K562 (cell line): ENCODE measurements at regions of chr7 and their contacts with region 1.

Region 1: DNA sequence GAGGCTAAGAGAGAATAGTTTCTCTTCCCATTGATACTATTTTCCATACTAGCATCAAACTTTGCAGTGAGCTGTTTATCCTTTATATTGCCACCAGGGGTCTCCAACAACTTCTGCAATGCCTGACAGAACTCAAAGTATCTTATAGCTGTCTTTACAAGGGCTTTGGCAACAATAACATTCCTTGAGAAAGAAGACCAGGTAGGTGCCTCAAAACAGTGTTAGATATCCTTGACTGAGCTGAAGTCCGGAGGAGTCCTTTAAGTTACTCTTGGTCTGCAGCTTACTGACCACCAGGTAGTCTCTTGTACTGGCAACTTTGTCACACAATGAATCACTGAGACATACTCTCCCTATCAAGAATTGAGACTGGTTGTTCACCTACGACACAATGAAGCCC is 30.0 kb upstream of the TES start:
- DNase-seq: peak; percentile 39 to 62 (median 48)
- ATAC-seq: peak; percentile 93
- H3K4me3 ChIP-seq: no peak overlapping the region
- H3K27ac ChIP-seq: no peak overlapping the region
- H3K4me1 ChIP-seq: peaks cover 0 to 5% of the 10 kb centered on the region in 2 experiments; a peak in 1 of 5 replicates
- H3K27me3 ChIP-seq: no peaks in the 10 kb centered on the region
- CTCF ChIP-seq: peak; percentile 70 to 92 (median 79)
- EP300 ChIP-seq: no peak
- POLR2A ChIP-seq: no peak
- RAD21 ChIP-seq: peak; percentile 98 to 99

Region 2: DNA sequence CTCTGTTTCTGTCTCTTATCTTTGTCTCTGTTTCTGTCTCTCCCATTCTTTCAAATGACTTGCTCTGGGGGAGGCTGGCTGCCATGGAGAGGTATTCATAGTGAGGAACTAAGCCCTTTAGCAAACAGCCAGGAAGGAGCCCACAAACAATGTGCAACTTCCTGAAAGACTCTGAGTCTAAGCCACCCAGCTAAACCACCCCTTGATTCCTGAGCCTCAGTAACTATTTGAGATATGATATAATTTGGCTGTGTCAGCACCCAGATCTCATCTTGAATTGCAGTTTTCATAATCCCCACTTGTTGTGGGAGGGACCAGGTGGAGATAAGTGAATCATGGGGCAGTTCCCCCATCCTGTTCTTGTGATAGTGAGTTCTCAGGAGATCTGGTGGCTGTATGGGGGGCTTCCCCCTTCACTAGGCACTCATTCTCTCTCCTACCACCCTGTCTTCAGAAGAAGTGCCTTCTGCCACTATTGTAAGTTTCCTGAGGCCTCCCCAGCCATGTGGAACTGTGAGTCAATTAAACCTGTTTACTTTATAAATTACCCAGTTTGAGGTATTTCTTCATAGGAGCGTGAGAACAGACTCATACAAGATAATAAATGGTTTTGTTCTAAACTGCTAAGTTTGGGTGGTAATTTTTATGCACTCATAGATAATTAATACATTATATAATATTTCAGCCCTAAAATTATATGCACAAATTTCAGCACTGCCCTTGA is 1886.9 kb before region 1 on chr7:
- CTCF ChIA-PET with region 1: no interaction called
- POLR2A ChIA-PET with region 1: no interaction called
- in situ Hi-C with region 1: no loop called
- intact Hi-C with region 1: no loop called
- DNase-seq: no peak
- ATAC-seq: no peak
- H3K4me3 ChIP-seq: no peak overlapping the region
- H3K27ac ChIP-seq: no peak overlapping the region
- H3K4me1 ChIP-seq: no peaks in the 10 kb centered on the region
- H3K27me3 ChIP-seq: no peaks in the 10 kb centered on the region
- CTCF ChIP-seq: no peak
- EP300 ChIP-seq: no peak
- POLR2A ChIP-seq: no peak
- RAD21 ChIP-seq: no peak

Region 3: DNA sequence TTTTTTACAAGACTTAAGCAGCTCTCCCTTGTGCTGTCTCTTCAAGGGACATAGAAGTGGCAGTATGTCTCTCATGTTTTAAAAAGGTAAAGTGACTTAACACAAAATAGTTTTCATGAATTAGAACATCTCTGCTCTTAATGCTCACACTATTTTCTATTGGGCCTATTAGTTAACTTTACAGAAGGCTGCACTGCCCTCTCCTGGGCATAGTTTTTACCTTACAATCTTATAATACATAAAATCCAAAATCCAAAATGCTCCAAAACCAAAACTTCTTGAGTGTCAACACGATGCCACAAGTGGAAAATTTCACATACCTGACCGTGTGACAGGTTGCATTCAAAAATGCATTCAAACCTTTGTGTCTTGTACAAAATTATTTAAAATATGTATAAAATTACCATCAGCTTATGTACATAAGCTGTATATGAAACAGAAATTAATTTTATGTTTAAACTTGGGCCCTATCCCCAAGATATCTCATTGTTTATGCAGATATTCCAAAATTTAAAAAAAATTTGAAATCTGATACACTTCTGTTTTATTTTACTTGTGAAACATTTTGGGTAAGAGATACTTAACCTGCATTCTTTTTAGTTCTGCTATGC is 55.8 kb after region 1 on chr7:
- CTCF ChIA-PET with region 1: interaction called, 50 read pairs
- POLR2A ChIA-PET with region 1: interaction called, 8 read pairs
- in situ Hi-C with region 1: loop called (anchors 5 kb)
- intact Hi-C with region 1: loop called (anchors 1 kb)
- DNase-seq: peak; percentile 40 to 70 (median 42)
- ATAC-seq: peak; percentile 59
- H3K4me3 ChIP-seq: no peak overlapping the region
- H3K27ac ChIP-seq: no peak overlapping the region
- H3K4me1 ChIP-seq: peaks cover 3 to 13% of the 10 kb centered on the region in 2 experiments; a peak in 4 of 5 replicates
- H3K27me3 ChIP-seq: no peaks in the 10 kb centered on the region
- CTCF ChIP-seq: peak; percentile 46 to 81 (median 64); a peak in 5 of 6 replicates
- EP300 ChIP-seq: no peak
- POLR2A ChIP-seq: no peak
- RAD21 ChIP-seq: peak; percentile 82 to 86

Region 4: GRCh38 chr7:116438267-116438666 is 258.0 kb after region 1 on chr7:
- CTCF ChIA-PET with region 1: no interaction called
- POLR2A ChIA-PET with region 1: no interaction called
- in situ Hi-C with region 1: no loop called
- intact Hi-C with region 1: loop called (anchors 5 kb)
- DNase-seq: peak in 2 of 4 experiments; percentile 20 to 49
- ATAC-seq: peak; percentile 79
- H3K4me3 ChIP-seq: no peak overlapping the region
- H3K27ac ChIP-seq: no peak overlapping the region
- H3K4me1 ChIP-seq: peaks cover 8 to 25% of the 10 kb centered on the region in 2 experiments; a peak in 3 of 5 replicates
- H3K27me3 ChIP-seq: no peaks in the 10 kb centered on the region; a peak in 1 of 5 replicates
- CTCF ChIP-seq: peak; percentile 32 to 71 (median 50); a peak in 4 of 6 replicates
- EP300 ChIP-seq: no peak
- POLR2A ChIP-seq: no peak
- RAD21 ChIP-seq: peak; percentile 70 to 80

Region 5: GRCh38 chr7:116525913-116526861 is 345.9 kb after region 1 on chr7:
- CTCF ChIA-PET with region 1: no interaction called
- POLR2A ChIA-PET with region 1: no interaction called
- in situ Hi-C with region 1: no loop called
- intact Hi-C with region 1: loop called (anchors 2 kb)
- DNase-seq: peak; percentile 88 to 94 (median 94)
- ATAC-seq: peak; percentile 97
- H3K4me3 ChIP-seq: peak overlapping the region; percentile 50
- H3K27ac ChIP-seq: no peak overlapping the region
- H3K4me1 ChIP-seq: peaks cover 21 to 24% of the 10 kb centered on the region in 2 experiments
- H3K27me3 ChIP-seq: peaks cover 0 to 7% of the 10 kb centered on the region in 2 experiments; a peak in 2 of 5 replicates
- CTCF ChIP-seq: peak; percentile 77 to 91 (median 80)
- EP300 ChIP-seq: no peak
- POLR2A ChIP-seq: no peak
- RAD21 ChIP-seq: peak; percentile 96 to 98

Region 6: DNA sequence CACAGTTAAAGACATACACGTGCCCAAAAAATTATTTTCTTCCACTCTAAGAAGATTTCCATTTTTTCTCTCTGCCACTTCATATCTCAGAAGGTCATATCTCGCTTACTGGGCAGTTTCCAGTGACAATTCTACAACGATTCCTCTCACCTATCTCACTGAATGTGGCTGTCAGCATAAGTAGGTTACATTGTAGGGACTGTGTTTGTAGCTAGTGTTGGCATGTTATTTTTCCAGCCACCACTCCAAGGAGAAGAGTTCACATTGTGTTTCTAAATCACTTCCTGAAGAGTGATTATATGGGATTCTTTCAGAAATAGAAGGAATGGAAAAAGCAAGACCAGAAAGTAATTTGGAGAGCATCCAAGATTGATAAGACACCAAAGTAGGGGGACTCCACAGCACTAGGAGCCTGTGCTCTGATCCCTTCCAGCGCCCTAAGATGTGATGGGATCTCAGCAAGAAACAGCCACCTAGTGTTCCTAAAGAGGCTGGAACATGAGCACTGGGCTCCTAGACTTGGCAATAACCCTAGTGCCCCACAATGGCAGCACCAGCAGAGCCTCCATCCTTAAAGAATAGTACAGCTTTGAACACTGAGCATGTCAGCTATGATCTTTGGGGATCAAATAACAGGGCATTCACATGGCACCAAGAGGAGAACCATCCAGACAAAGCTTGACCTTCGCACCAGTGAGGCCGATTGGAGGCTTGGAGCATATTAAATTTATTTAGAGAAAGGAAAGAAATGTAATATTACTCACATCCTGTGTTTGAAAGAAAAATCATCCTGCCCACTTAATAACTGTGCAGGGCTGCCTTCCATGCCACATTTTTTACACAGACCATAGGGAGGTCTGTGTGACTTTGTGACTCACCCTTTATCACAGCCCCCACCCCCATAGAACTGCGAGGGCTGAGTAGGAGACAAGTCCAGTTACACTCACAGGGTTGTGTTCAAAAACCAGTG is 396.3 kb after region 1 on chr7:
- CTCF ChIA-PET with region 1: no interaction called
- POLR2A ChIA-PET with region 1: interaction called, 3 read pairs
- in situ Hi-C with region 1: loop called (anchors 5 kb)
- intact Hi-C with region 1: no loop called
- DNase-seq: peak in 1 of 4 experiments; percentile 15
- ATAC-seq: peak; percentile 25; the same call in 1 of the 3 replicates
- H3K4me3 ChIP-seq: no peak overlapping the region
- H3K27ac ChIP-seq: no peak overlapping the region
- H3K4me1 ChIP-seq: no peaks in the 10 kb centered on the region
- H3K27me3 ChIP-seq: peaks cover 0 to 3% of the 10 kb centered on the region in 2 experiments; a peak in 1 of 5 replicates
- CTCF ChIP-seq: no peak
- EP300 ChIP-seq: no peak
- POLR2A ChIP-seq: no peak
- RAD21 ChIP-seq: no peak